ENCODE measurements at regions of chr1 and their contacts with region 1.

Region 1: DNA sequence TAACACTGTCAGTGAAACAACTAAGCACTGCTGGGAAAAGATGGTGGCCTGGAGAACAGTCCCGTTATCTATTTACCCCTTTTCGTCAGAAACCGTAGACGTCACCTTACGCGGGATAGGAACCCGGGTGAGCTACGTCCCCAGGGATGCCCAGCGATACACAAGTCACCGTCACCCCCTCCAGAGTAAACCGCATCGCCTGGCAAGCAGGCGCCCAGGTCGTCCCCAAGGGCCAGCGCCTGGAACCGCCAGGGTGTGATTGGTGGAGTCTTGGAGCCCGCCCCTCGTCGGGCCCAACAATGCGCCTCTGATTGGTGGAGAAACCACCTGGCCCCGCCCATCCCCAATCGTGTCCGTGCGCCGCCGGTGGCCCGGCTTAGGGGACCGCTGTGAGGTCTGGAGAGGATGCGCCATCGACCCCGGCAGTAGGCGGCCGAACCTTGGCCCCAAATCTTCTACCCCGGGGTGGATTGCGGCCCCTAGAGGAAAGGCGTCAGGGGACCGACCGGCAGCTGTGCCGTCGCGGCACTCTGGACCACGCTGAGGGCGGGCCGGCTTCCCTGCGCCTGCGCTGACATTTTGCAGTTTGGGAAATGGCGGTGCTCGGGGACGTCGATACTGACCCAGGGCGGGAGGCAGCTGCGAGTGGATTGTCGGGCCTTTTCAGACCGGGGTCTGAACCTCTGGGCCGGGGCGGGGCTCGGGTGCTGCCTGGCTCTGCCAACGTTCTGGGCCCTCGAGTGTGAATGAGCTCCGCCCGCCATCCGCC is 34.4 kb downstream of the SLC2A1 start:
- DNase-seq: peak; percentile 97
- H3K4me3 ChIP-seq: peak overlapping the region; percentile 74 to 93
- H3K27ac ChIP-seq: peak overlapping the region; percentile 94 to 95
- H3K4me1 ChIP-seq: no peaks in the 10 kb centered on the region
- H3K27me3 ChIP-seq: no peaks in the 10 kb centered on the region
- CTCF ChIP-seq: no peak
- POLR2A ChIP-seq: peak; percentile 51

Region 2: GRCh38 chr1:43067977-43068751 is 143.9 kb after region 1 on chr1:
- intact Hi-C with region 1: loop called (anchors 5 kb)
- DNase-seq: no peak
- H3K4me3 ChIP-seq: peak overlapping the region; percentile 34 to 35
- H3K27ac ChIP-seq: no peak overlapping the region
- H3K4me1 ChIP-seq: peaks cover 5% of the 10 kb centered on the region
- H3K27me3 ChIP-seq: no peaks in the 10 kb centered on the region
- CTCF ChIP-seq: no peak
- POLR2A ChIP-seq: no peak

Measured in testis (tissue), 5 donors.